Left ventricle myocardium inferior (tissue), 1 donor: ENCODE measurements at regions of chr7 and their contacts with region 1.

Region 1: DNA sequence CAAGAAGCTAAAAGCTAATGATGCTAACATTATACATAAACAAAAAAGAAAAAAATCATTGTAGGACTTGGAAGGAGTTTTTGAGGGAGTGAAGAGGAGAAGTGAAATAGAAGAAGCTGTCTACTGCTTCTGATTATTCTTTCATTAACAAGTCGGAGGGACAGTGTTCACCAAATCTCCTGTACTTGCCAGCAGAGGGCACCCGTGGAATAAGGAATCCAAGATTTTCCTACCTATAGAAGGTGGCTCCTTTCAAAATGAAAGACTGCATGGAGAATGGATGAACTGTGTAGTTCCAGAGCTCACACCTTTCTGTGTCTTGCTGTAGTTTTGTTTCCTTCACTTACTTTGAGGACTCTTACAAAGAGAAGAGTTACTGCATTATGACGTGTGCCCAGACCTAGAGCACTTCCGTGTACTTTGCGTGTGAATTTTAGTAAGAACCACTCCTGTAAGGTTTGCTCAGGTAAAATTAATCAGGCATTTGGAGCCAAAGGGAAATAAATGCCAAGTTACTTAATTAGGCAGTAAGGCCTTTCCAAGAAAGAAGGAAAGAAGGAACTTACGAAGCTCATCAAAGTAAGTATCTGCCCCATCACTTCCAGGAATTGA is 145.1 kb downstream of the SEMA3D start:
- DNase-seq: peak; percentile 42
- H3K4me3 ChIP-seq: no peak overlapping the region
- H3K27ac ChIP-seq: no peak overlapping the region
- H3K4me1 ChIP-seq: no peaks in the 10 kb centered on the region
- H3K27me3 ChIP-seq: no peaks in the 10 kb centered on the region
- CTCF ChIP-seq: peak; percentile 78

Region 2: DNA sequence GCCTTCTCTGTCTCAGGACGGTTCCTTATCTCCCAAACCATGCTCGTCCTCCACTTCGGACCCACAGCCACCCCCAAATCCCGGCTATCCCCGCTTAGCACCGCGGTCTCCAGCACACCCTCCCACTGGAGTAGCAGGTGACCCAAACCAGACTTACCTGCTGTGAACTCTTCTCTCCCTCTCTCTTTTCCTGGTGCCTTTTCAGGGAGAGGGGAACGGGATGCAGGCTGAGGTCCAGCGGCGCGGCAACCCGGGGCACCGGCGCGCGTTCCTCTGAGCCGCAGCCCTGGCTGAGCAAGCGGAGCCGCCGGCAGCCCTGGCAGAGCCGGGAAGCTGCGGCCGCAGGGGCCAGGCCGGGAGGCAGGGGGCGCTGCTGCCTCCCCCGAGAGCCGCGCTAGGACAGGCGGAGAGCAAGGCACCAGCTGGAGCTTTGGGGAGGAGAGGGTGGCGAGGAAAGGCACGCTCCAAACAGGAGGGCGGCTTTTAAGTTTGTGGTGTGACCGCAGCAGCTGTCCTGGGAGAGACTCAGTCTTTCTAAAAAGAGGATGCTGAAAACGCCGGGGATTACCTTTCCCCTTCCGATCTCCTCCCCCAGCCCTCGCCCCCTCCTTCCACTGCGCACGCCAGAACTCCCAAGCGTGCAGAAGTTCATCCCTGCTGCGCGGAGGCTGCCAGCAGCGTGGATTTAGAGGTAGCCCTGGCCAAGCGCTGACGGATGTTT is 145.0 kb after region 1 on chr7 and contains the start of gene SEMA3D:
- intact Hi-C with region 1: loop called (anchors 5 kb)
- DNase-seq: peak; percentile 51
- H3K4me3 ChIP-seq: peak within 1 kb of the TSS; percentile 68
- H3K27ac ChIP-seq: peak within 1 kb of the TSS; percentile 69
- H3K4me1 ChIP-seq: peaks cover 27% of the 10 kb centered on the region
- H3K27me3 ChIP-seq: peaks cover 63% of the 10 kb centered on the region
- CTCF ChIP-seq: peak; percentile 81
- total RNA-seq, gene SEMA3D: 1.8 TPM

Region 3: DNA sequence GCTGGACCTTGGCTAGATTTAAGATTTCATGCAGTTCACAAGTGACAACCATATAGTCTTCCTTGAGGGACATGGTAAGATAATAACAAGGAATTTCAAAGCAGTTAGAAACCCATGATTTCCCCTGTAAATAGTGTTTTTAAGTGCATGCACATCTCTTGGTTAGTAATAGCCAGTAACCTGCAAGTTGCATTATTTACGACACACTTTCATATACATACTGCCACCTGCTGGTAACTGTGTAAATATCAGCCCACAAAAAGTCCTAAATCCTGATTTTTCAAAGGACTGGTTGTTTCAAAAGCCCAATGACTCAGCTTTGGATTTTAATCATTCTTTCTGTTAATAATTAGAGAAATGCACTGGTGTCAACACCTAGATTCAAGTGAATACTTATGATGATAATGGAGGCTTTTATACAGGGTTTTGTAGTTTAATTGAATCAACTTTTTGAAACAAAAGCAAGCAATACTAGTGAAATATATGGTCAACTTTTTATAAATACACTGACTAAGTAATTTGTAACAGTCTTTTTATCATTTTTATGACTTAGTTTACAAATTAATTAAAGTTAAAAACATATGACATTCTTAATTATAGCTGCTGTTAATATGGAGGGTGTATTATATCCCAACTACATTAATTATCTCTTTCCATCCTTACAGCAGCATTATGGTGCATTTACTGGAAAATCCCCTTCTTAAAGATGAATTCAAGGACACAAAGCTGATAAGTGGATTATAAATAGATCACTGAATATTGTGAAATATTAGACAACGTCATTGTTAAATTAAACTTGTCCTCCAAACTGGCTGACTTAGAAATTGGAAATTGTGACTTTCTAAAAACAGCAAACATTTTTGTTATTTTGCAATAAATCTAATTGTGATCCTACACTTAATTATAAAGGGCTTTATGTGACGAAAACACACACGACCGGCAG is 512.8 kb after region 1 on chr7:
- intact Hi-C with region 1: loop called (anchors 5 kb)
- DNase-seq: no peak
- H3K4me3 ChIP-seq: no peak overlapping the region
- H3K27ac ChIP-seq: no peak overlapping the region
- H3K4me1 ChIP-seq: no peaks in the 10 kb centered on the region
- H3K27me3 ChIP-seq: no peaks in the 10 kb centered on the region
- CTCF ChIP-seq: peak; percentile 76